ENCODE measurements at regions of chr5 and their contacts with region 1.

Region 1: DNA sequence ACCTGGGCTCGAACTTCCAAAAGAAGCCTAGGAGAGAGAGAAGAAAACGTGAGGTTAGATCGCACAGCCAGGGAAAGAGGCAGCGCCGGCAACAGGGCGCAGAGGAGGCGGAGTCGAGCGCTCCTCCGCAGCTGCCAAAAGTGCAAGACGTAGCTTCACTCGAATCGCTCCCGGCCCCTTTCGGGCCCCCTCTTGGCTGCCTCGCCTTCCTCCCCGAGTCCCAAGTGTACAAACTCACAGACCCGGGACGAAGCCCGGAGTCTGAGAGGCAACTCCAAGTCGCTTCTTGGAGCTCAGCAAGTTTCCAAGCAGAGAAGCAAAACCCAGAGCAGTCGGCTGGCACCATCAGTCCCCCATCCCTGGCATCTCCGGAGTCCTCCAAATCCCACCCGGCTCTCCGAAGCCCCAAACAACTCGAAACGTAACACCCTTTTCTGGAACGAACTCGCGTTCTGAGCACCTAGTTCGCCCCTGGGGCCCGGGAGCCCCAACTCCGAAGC is 1.2 kb downstream of the MIER3 start:
- DNase-seq: peak; percentile 68
- ATAC-seq: peak; percentile 59
- H3K4me3 Mint-ChIP-seq: peak overlapping the region; percentile 98
- H3K27ac Mint-ChIP-seq: peak overlapping the region; percentile 83
- H3K4me1 Mint-ChIP-seq: peaks cover 24% of the 10 kb centered on the region
- H3K27me3 Mint-ChIP-seq: peaks cover 17% of the 10 kb centered on the region

Region 2: DNA sequence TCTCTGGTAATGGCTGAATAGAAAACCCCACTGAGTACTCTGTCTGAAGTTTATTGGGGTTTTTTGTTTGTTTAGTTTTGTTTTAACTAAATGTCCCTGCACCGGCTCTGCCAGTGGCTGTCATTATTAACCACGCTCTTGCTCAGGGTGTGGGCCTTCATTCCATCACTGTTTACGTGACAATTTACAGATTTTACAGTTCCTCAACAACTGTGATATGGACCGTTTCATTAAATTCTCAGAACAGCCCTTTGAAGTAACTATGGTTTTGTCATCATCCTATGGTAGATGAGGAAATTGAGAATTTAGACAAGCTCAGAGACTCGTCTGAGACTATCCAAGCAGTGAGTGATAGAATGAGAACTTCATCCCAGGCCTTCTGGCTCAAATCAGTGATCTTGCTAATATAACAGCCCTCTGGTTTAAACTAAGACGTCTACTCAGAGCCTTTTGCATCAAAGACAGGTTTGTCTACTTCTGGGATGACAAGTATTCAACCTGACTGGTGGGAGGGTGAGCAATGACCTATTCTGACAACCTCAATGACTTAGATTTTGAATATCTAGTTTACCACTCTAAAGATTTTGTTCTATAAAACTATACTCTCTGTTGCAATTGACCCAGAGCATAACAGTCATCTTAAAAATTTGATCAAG is 212.6 kb before region 1 on chr5:
- CTCF ChIA-PET with region 1: no interaction called
- POLR2A ChIA-PET with region 1: no interaction called
- DNase-seq: no peak
- ATAC-seq: no peak
- H3K4me3 Mint-ChIP-seq: no peak overlapping the region
- H3K27ac Mint-ChIP-seq: no peak overlapping the region
- H3K4me1 Mint-ChIP-seq: peaks cover 24% of the 10 kb centered on the region
- H3K27me3 Mint-ChIP-seq: no peaks in the 10 kb centered on the region

Region 3: DNA sequence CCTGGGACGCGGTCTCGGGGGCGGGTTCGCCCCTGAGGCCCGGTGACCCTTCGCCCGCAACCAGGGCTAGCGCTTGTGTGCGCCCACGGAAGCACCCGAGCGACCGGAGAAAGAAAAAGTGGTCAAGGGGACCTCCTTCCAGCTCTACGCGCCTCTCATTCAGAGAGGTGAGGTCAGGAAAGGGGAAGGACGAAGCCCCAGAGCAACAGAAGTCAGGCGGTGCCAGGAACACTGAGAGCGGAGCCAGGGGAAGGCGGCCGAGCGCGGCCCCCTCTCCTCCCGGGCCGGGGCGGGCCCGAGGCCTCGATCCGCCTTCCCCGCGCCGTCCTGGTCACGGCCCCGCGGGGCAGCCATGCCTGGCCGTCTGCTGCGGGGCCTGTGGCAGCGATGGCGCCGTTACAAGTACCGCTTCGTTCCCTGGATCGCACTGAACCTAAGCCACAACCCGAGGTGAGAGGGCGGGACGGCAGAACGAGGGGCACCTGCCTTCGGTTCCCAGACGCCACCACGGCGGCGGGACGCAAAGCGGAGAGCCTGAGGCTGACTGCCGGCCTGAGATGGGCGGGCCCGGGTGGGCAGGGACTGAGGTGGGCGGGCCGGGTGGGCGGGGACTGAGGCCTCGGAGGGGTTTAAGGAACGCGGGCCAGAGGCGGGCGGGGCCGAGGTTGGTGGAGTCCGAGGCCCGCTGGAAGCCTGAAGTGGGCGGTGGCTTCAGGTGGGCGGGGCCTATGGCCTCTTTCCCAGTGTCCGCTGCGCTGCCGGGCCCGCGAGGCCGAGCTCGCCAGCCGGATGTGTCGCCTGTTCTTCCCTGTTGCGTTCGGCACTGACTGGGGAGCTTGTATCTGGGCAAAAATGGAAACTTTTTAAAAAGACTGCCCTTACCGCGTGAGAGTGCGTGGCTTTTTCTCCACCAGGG is 41.1 kb before region 1 on chr5 and contains the start of gene SETD9:
- CTCF ChIA-PET with region 1: no interaction called
- POLR2A ChIA-PET with region 1: interaction called, 12 read pairs
- DNase-seq: peak; percentile 95
- ATAC-seq: peak; percentile 89
- H3K4me3 Mint-ChIP-seq: peak within 1 kb of the TSS; percentile 81
- H3K27ac Mint-ChIP-seq: peak within 1 kb of the TSS; percentile 86
- H3K4me1 Mint-ChIP-seq: peaks cover 24% of the 10 kb centered on the region
- H3K27me3 Mint-ChIP-seq: peaks cover 15% of the 10 kb centered on the region
- total RNA-seq, gene SETD9: 4.7 to 5.6 TPM

Measured in activated CD8-positive, alpha-beta T cell treated with anti-CD3 and anti-CD28 coated beads, Interleukin-2, amount 10 ng/mL, durations not matched to agents 7 days and 5 days (primary cell).